A549 (cell line): ENCODE measurements at regions of chr20 and their contacts with region 1.

Region 1: DNA sequence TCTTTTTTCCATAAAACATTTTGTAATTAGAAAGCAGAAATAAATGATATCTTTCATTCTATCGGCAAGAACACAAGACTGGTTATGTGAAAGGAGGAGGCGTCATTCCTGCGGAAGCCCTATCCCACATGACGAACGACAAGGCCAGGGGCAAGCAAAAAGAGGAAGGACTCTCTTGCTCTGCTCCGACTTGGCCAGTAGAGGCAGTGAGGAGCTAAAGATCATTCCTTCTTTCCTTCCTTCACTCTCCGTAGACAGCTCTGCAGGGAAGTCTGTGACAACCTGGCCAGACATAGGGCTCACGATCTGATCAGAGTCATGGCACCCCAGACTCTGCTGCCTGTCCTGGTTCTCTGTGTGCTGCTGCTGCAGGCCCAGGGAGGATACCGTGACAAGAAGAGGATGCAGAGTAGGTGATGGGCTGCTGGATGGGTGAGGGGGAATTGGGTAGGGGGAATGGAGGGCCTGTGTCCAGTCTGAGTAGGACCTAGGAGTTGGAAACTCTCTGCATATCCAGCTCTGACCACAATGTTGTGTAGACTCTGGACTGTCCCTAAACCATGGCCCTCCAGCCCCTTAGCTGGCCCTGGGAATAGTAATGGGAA is at the start of gene WFDC10A:
- DNase-seq: peak; percentile 62 to 64
- ATAC-seq: peak; percentile 98 to 100
- H3K4me3 ChIP-seq: no peak within 1 kb of the TSS
- H3K27ac ChIP-seq: no peak within 1 kb of the TSS
- H3K4me1 ChIP-seq: no peaks in the 10 kb centered on the region
- CTCF ChIP-seq: peak; percentile 46
- EP300 ChIP-seq: no peak
- POLR2A ChIP-seq: no peak
- RAD21 ChIP-seq: peak; percentile 33 to 49; a peak in 3 of 5 replicates
- polyA plus RNA-seq, gene WFDC10A: not detected in 2 replicates

Region 2: GRCh38 chr20:45617591-45617990 is 12.0 kb before region 1 on chr20:
- CTCF ChIA-PET with region 1: interaction called, 15 read pairs
- POLR2A ChIA-PET with region 1: no interaction called
- DNase-seq: no peak
- ATAC-seq: no peak
- H3K4me3 ChIP-seq: no peak overlapping the region
- H3K27ac ChIP-seq: no peak overlapping the region
- H3K4me1 ChIP-seq: no peaks in the 10 kb centered on the region
- CTCF ChIP-seq: no peak
- EP300 ChIP-seq: no peak
- POLR2A ChIP-seq: no peak
- RAD21 ChIP-seq: no peak